Pancreas (tissue), 10 donors: ENCODE measurements at regions of chr2 and their contacts with region 1.

Region 1: GRCh38 chr2:158745044-158745865 is 49.9 kb upstream of the DAPL1 start:
- DNase-seq: peak in 2 of 6 donors; percentile 26 to 35
- ATAC-seq: peak in 3 of 4 donors; percentile 80 to 88 (median 82)
- H3K4me3 ChIP-seq: no peak overlapping the region
- H3K27ac ChIP-seq: no peak overlapping the region
- H3K4me1 ChIP-seq: no peaks in the 10 kb centered on the region
- H3K27me3 ChIP-seq: no peaks in the 10 kb centered on the region
- CTCF ChIP-seq: peak in 3 of 4 donors; percentile 32 to 42 (median 37)

Region 2: DNA sequence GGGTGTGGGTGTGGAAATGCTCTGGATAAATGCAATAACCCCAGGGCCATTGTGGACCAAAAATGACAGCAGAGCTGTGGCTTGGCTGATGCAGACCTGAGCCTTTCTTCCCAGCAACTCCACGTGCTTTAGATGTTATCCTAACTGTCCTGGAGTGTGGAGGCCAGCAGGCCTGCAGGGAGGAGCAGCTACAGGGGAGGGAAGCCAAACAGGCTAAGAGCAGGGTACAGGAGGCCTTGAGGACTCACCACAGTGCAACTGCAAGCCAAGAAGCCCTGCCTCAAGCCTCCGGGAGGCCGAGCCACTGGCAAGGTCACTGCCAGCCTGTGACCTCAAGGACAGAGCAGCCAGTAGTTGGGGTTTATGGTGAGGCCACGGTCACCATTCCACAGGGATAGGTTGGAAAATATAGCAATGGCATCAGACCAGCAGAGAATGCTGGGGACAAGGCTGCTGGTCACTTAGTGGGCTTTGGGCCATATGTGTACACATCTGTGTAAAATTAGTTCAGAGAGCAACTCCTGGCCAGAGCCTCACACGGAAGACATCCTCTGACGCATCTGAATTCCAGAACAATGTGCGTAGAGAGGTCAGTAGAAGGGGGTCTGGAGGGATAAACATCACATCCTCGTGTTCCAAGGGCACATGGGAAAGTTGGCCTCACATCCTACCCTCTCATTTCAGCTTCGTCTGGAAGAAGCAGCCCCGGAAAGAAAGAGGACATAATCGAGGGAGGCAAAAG is 719.8 kb before region 1 on chr2:
- intact Hi-C with region 1: loop called in 2 of 3 experiments (anchors 5 kb)
- DNase-seq: no peak
- ATAC-seq: peak in 1 of 4 donors; percentile 23
- H3K4me3 ChIP-seq: no peak overlapping the region
- H3K27ac ChIP-seq: no peak overlapping the region
- H3K4me1 ChIP-seq: no peaks in the 10 kb centered on the region
- H3K27me3 ChIP-seq: no peaks in the 10 kb centered on the region
- CTCF ChIP-seq: no peak

Region 3: GRCh38 chr2:158179660-158180059 is 565.6 kb before region 1 on chr2:
- intact Hi-C with region 1: loop called in 1 of 3 experiments (anchors 10 kb)
- DNase-seq: no peak
- ATAC-seq: peak in 2 of 4 donors; percentile 41 to 42
- H3K4me3 ChIP-seq: no peak overlapping the region
- H3K27ac ChIP-seq: no peak overlapping the region
- H3K4me1 ChIP-seq: no peaks in the 10 kb centered on the region
- H3K27me3 ChIP-seq: no peaks in the 10 kb centered on the region
- CTCF ChIP-seq: no peak

Region 4: GRCh38 chr2:158671360-158672245 is 73.7 kb before region 1 on chr2:
- intact Hi-C with region 1: no loop called
- DNase-seq: no peak
- ATAC-seq: no peak
- H3K4me3 ChIP-seq: no peak overlapping the region
- H3K27ac ChIP-seq: no peak overlapping the region
- H3K4me1 ChIP-seq: no peaks in the 10 kb centered on the region
- H3K27me3 ChIP-seq: no peaks in the 10 kb centered on the region
- CTCF ChIP-seq: no peak